CD4-positive, alpha-beta T cell (primary cell): ENCODE measurements at regions of chr1 and their contacts with region 1.

Region 1: DNA sequence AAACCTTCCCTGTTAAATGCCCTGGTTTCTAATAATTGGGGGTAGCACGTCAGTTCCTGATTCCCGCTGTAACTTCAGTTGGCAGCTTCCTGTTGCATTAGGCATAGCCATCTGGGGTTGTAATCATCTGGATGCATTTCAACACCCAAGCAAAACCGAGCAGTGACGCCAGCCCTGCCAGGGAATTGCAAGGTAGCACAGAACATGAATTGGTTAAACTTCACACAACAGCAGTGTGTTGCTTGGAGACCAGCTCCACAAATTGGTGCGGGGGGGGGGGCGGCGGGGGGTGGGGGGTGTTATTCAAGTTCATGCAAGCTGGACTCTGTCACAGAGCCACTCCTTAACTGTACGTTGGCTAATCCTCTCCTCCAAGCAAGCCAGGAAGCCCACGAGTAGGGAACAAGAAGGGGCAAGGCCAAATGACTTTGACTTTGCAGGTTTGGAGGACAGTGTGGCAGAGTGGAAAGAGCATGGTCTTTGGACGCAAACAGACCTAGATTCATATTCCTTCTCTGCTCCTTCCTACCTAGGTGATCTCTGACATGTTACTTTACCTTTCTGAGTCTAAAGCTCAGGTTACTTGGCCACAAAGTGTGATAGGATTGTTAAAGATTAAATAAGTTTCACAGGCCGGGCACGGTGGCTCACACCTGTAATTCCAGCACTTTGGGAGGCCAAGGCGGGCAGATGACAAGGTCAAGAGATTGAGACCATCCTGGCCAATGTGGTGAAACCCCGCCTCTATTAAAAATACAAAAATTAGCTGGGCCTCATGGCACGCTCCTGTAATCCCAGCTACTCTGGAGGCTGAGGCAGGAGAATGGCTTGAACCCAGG is 4.7 kb downstream of the LAX1 start:
- DNase-seq: peak in 3 of 14 experiments; percentile 11 to 66 (median 60)
- ATAC-seq: no peak
- H3K4me3 ChIP-seq: no peak overlapping the region
- H3K4me3 Mint-ChIP-seq: peak overlapping the region; percentile 62
- H3K27ac ChIP-seq: no peak overlapping the region
- H3K27ac Mint-ChIP-seq: peak overlapping the region; percentile 79
- H3K4me1 ChIP-seq: peaks cover 32% of the 10 kb centered on the region
- H3K4me1 Mint-ChIP-seq: peaks cover 51% of the 10 kb centered on the region
- H3K27me3 ChIP-seq: no peaks in the 10 kb centered on the region
- H3K27me3 Mint-ChIP-seq: no peaks in the 10 kb centered on the region
- CTCF ChIP-seq: no peak

Region 2: GRCh38 chr1:203649999-203650855 is 119.5 kb before region 1 on chr1:
- CTCF ChIA-PET with region 1: no interaction called
- POLR2A ChIA-PET with region 1: interaction called, 10 read pairs
- intact Hi-C with region 1: no loop called
- DNase-seq: peak; percentile 44 to 88 (median 70)
- ATAC-seq: peak; percentile 61
- H3K4me3 ChIP-seq: peak overlapping the region; percentile 48
- H3K4me3 Mint-ChIP-seq: peak overlapping the region; percentile 85
- H3K27ac ChIP-seq: peak overlapping the region; percentile 70 to 82
- H3K27ac Mint-ChIP-seq: peak overlapping the region; percentile 91
- H3K4me1 ChIP-seq: peaks cover 76% of the 10 kb centered on the region
- H3K4me1 Mint-ChIP-seq: peaks cover 63% of the 10 kb centered on the region
- H3K27me3 ChIP-seq: no peaks in the 10 kb centered on the region
- H3K27me3 Mint-ChIP-seq: no peaks in the 10 kb centered on the region
- CTCF ChIP-seq: no peak

Region 3: GRCh38 chr1:203722909-203723308 is 46.8 kb before region 1 on chr1:
- CTCF ChIA-PET with region 1: interaction called, 3 read pairs
- POLR2A ChIA-PET with region 1: interaction called, 4 read pairs
- intact Hi-C with region 1: loop called in 1 of 2 experiments (anchors 2 kb)
- DNase-seq: no peak
- ATAC-seq: no peak
- H3K4me3 ChIP-seq: no peak overlapping the region
- H3K4me3 Mint-ChIP-seq: no peak overlapping the region
- H3K27ac ChIP-seq: no peak overlapping the region
- H3K27ac Mint-ChIP-seq: no peak overlapping the region
- H3K4me1 ChIP-seq: no peaks in the 10 kb centered on the region
- H3K4me1 Mint-ChIP-seq: no peaks in the 10 kb centered on the region
- H3K27me3 ChIP-seq: no peaks in the 10 kb centered on the region
- H3K27me3 Mint-ChIP-seq: no peaks in the 10 kb centered on the region
- CTCF ChIP-seq: no peak

Region 4: GRCh38 chr1:203744075-203744972 is 25.4 kb before region 1 on chr1:
- CTCF ChIA-PET with region 1: interaction called, 4 read pairs
- POLR2A ChIA-PET with region 1: interaction called, 48 read pairs
- intact Hi-C with region 1: loop called in 1 of 2 experiments (anchors 1 kb)
- DNase-seq: peak in 8 of 14 experiments; percentile 8 to 84 (median 40)
- ATAC-seq: peak; percentile 96
- H3K4me3 ChIP-seq: peak overlapping the region; percentile 21
- H3K4me3 Mint-ChIP-seq: peak overlapping the region; percentile 74
- H3K27ac ChIP-seq: peak overlapping the region; percentile 57 to 68
- H3K27ac Mint-ChIP-seq: peak overlapping the region; percentile 87
- H3K4me1 ChIP-seq: peaks cover 11% of the 10 kb centered on the region
- H3K4me1 Mint-ChIP-seq: peaks cover 25% of the 10 kb centered on the region
- H3K27me3 ChIP-seq: no peaks in the 10 kb centered on the region
- H3K27me3 Mint-ChIP-seq: no peaks in the 10 kb centered on the region
- CTCF ChIP-seq: no peak

Region 5: DNA sequence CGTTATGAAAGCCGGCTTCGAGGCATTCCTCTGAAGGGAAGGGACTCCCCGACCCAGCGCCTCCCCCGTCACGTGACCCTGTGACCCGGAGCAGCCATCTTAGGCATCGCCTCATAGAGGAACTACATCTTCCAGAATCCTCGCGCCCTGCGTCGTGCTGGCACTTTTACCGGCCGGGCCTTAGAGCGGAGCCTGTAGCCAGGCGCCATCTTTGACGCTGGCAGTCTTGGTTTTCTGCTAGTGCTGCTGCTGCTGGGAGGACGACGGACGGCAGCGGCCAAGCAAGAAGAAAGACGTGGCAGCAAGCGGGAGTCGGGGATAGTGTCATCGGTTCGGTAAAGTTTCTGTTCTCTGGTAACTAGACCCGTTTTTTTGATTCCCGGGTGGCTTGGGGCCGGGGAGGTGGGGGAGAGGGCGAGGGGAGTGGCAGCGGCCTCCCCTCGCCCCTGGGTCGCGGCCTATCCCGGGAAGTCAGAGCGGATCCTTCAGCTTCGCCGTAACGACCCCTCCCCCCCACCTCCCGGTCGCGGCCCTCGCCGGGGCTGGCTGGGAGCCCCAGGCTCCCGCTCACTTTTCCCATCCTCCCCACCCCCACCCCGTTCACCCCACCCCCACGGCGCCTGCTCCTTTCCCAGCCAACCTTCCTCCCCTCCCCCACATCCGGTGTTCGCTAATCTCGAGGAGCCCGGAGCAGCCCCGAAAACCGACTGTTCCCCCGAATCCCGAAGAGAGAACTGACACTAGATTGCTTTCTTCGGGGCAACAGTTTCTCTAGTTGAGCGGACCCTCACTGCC is 25.9 kb after region 1 on chr1 and contains the starts of genes ZBED6 and ZC3H11A:
- CTCF ChIA-PET with region 1: interaction called, 4 read pairs
- POLR2A ChIA-PET with region 1: interaction called, 19 read pairs
- intact Hi-C with region 1: loop called (anchors 1 to 2 kb)
- DNase-seq: peak; percentile 96 to 100 (median 98)
- ATAC-seq: peak; percentile 98
- H3K4me3 ChIP-seq: peak within 1 kb of the TSS; percentile 83
- H3K4me3 Mint-ChIP-seq: peak within 1 kb of the TSS; percentile 98
- H3K27ac ChIP-seq: peak within 1 kb of the TSS; percentile 83 to 87
- H3K27ac Mint-ChIP-seq: peak within 1 kb of the TSS; percentile 86
- H3K4me1 ChIP-seq: peaks cover 32% of the 10 kb centered on the region
- H3K4me1 Mint-ChIP-seq: peaks cover 56% of the 10 kb centered on the region
- H3K27me3 ChIP-seq: no peaks in the 10 kb centered on the region
- H3K27me3 Mint-ChIP-seq: no peaks in the 10 kb centered on the region
- CTCF ChIP-seq: no peak
- total RNA-seq, gene ZBED6: 25.0 to 25.2 TPM
- total RNA-seq, gene ZC3H11A: 67.6 to 73.3 TPM

Region 6: DNA sequence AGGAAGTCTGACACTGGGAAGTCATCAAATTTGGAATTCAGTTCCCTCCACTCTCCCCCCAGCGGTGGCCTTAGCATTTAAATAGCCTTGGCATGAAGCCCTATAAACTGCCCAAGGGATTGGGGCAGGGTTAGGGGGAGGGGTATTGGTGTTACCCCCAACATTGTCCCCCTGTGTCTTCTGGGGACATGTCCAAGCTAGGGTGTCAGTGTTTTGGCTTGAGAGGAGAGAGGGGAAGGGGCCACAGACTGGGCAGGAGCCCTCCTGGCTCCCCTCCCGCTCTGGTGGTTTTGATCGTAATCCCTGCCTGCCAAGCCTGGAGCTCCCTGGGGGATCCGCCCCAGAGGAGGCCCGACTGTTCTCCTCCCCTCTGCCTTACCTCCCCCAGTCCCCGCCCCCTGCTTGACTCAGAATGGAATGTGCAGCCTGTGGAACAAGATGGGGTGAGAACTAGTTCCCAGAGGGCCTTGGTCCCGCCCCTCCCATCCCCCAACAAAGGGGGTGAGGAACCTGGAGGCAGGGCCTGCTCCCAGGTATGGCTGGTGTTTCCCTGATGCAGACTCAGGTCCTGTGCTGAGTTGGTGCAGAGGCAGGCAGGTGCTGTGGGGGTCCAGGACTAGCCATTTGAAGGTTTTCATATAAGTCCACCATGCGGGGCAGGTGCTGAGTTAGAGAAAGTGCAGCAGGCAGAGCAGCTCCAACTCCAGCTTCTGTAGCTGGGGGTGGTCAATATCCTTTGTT is 310.6 kb after region 1 on chr1:
- CTCF ChIA-PET with region 1: no interaction called
- POLR2A ChIA-PET with region 1: no interaction called
- intact Hi-C with region 1: no loop called
- DNase-seq: no peak
- ATAC-seq: no peak
- H3K4me3 ChIP-seq: no peak overlapping the region
- H3K4me3 Mint-ChIP-seq: no peak overlapping the region
- H3K27ac ChIP-seq: no peak overlapping the region
- H3K27ac Mint-ChIP-seq: no peak overlapping the region
- H3K4me1 ChIP-seq: peaks cover 6% of the 10 kb centered on the region
- H3K4me1 Mint-ChIP-seq: peaks cover 1% of the 10 kb centered on the region
- H3K27me3 ChIP-seq: peaks cover 5 to 19% of the 10 kb centered on the region in 2 experiments
- H3K27me3 Mint-ChIP-seq: peaks cover 37% of the 10 kb centered on the region
- CTCF ChIP-seq: no peak